ENCODE measurements at regions of chrX and their contacts with region 1.

Region 1: DNA sequence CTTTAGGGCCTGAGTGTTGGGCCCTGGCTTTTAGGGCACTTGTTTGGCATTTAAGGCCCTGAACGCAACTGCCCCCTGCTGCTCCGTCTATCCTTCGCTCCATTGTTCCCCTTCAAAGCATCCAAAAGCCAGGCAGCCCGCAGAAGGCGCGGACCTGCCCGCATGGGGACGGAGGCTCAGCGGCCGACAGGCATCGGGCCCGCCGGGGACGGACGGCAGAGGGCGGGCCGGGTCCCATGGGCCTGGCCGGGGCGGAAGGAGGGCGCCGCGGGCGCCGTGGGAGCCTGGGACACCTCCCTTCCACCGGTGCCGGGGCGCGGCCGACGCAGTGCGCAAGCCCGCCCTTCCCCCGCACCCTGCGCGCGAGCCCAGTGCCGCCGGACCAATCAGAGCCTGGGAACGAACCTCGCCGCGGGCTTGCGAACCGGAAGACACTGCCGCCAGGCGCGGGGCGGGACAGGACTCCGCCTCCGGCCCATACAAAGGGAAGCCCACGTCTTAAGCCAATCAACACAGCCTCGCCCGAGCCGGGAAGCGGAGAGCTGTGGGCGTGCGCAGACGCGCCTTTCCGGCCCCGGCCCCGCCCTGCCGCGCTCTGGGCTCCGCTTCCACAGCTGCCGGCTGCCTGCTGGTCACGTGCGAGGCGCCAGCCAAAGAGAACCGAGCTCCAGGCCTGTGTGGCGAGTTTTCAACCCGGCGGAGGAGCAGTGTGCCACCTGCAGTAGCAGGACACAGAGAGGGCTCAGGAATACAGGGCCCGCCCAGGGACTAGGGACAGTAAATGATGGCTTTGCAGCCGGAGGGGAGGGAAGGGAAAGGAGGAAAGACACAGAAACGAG is 2.1 kb upstream of the ARHGAP4 start:
- DNase-seq: peak; percentile 91
- ATAC-seq: peak; percentile 86
- H3K4me3 ChIP-seq: peak overlapping the region; percentile 79 to 95
- H3K27ac ChIP-seq: peak overlapping the region; percentile 99
- H3K4me1 ChIP-seq: peaks cover 50% of the 10 kb centered on the region
- H3K27me3 ChIP-seq: no peaks in the 10 kb centered on the region
- CTCF ChIP-seq: no peak

Region 2: DNA sequence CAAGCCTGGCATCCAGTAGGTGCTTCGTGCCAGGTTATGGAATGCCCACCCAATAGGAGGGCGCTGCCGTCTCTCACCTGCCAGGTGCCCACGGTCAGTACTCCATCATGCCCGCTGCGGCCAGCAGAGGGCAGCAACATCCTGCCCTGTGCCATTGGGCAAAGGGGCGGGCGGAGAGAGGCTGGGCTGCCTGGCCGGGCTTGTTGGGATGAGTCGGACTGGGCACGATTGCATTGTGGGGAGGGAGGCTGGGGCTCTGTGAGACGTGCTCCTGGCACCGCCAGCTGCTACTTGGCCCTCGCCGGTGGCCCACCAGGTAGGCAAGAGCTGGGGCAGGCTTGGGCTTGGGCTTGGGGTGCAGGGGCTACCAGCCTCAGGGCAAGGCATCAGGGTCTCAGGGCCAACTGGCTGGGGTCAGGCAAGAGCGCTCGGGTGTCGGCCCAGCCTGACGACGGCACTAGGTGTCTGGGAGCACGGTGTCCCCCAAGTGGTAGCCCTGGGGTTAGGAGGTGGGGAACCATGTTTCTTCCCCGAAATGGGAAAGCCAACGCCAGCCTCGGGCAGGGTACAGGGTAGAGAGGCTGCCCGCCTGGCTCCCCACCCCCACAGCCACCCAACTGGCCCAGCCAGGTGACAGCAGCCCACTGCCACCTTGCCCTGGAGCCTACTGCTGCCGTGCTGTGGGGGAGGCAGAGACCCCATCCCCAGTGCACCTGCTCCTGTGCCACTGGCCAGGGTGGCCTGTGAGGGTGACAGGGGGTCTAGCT is 164.0 kb before region 1 on chrX and contains the start of gene PLXNB3:
- CTCF ChIA-PET with region 1: no interaction called
- POLR2A ChIA-PET with region 1: no interaction called
- in situ Hi-C with region 1: no loop called
- intact Hi-C with region 1: loop called (anchors 10 kb)
- DNase-seq: peak; percentile 38
- ATAC-seq: peak; percentile 82
- H3K4me3 ChIP-seq: peak within 1 kb of the TSS; percentile 30 to 48
- H3K27ac ChIP-seq: peak within 1 kb of the TSS; percentile 81
- H3K4me1 ChIP-seq: peaks cover 25% of the 10 kb centered on the region
- H3K27me3 ChIP-seq: no peaks in the 10 kb centered on the region
- CTCF ChIP-seq: no peak
- total RNA-seq, gene PLXNB3: 14.3 TPM

Region 3: GRCh38 chrX:153909024-153909970 is 18.8 kb before region 1 on chrX:
- CTCF ChIA-PET with region 1: interaction called, 24 read pairs
- POLR2A ChIA-PET with region 1: no interaction called
- in situ Hi-C with region 1: no loop called
- intact Hi-C with region 1: no loop called
- DNase-seq: no peak
- ATAC-seq: peak; percentile 52
- H3K4me3 ChIP-seq: no peak overlapping the region
- H3K27ac ChIP-seq: 0 out of 2 replicates have a peak overlapping the region, but pooled peaks have one; percentile 1
- H3K4me1 ChIP-seq: peaks cover 16% of the 10 kb centered on the region
- H3K27me3 ChIP-seq: no peaks in the 10 kb centered on the region
- CTCF ChIP-seq: no peak

Region 4: DNA sequence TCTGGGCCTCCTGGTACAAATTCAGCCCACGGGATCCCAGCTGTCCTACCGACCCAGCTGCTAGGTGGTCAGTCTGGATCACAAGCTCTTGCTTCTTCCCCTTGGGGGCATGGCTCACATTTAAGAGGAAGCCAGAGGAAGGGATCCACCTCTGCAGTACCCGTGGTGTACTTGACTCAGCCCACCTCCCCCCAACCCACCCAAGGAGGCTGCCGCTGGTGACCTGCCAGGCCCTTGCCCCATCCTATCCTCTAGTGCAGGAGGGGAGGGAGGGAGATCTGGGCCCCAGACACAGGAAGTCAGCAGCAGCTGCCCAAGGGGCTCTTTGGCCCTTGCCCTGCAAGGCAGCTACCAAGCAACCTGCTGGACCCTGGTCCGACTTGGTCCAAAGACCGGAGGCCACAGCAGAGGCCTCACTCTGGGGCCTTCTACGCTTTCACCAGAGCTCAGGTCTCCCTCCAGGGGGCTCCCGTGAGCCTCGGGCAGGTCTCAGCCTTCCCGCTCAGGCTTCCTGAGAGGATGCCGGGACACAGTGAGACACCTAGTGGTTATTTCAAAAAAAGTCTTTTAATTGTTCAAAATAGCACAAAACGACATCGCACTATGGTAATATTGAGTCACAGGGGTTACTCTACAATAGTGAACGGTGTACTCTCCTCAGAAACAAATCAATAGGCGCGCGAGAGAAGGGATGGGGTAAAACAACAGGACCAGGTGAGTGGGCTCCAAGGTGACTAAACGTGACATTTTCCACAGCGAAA is 19.0 kb after region 1 on chrX:
- CTCF ChIA-PET with region 1: interaction called, 45 read pairs
- POLR2A ChIA-PET with region 1: interaction called, 9 read pairs
- in situ Hi-C with region 1: no loop called
- intact Hi-C with region 1: loop called (anchors 2 kb)
- DNase-seq: no peak
- ATAC-seq: peak; percentile 90
- H3K4me3 ChIP-seq: no peak overlapping the region
- H3K27ac ChIP-seq: peak overlapping the region; percentile 56
- H3K4me1 ChIP-seq: peaks cover 22% of the 10 kb centered on the region
- H3K27me3 ChIP-seq: no peaks in the 10 kb centered on the region
- CTCF ChIP-seq: no peak

Region 5: DNA sequence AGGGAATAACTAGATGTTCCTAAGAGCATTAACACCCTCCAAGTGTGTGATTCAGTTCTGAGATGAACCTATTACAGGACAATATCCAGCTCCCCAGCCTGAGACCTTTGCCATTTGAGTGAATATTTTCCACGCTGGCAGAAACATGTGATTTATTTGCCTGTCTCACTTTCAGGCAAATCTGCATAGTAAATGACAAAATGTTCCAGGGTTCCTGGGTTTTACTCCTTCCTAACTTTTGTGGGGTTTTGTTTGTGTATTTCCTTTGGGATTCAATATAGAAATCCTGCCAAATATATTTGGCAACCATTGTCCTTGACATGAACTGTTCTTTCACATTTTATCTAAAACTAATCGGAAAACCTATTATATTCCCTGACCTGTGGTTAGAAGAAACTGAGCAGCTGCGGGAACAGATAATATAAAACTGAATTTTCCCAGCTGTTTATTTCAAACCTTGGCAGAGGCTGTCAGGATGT is 1081.9 kb after region 1 on chrX:
- CTCF ChIA-PET with region 1: no interaction called
- POLR2A ChIA-PET with region 1: no interaction called
- in situ Hi-C with region 1: no loop called
- intact Hi-C with region 1: no loop called
- DNase-seq: no peak
- ATAC-seq: no peak
- H3K4me3 ChIP-seq: no peak overlapping the region
- H3K27ac ChIP-seq: no peak overlapping the region
- H3K4me1 ChIP-seq: no peaks in the 10 kb centered on the region
- H3K27me3 ChIP-seq: no peaks in the 10 kb centered on the region
- CTCF ChIP-seq: no peak

Measured in Panc1 (cell line).